Heart right ventricle (tissue), 16 donors: ENCODE measurements at regions of chr6 and their contacts with region 1.

Region 1: GRCh38 chr6:150072201-150072600 is 3.3 kb upstream of the ULBP3 start:
- DNase-seq: peak in 1 of 2 donors; percentile 30
- ATAC-seq: no peak
- H3K4me3 ChIP-seq: no peak overlapping the region
- H3K27ac ChIP-seq: no peak overlapping the region
- H3K4me1 ChIP-seq: peaks cover 0 to 16% (median 7%) of the 10 kb centered on the region in 9 donors
- H3K27me3 ChIP-seq: peaks cover 0 to 17% (median 0%) of the 10 kb centered on the region in 7 donors
- CTCF ChIP-seq: no peak

Region 2: DNA sequence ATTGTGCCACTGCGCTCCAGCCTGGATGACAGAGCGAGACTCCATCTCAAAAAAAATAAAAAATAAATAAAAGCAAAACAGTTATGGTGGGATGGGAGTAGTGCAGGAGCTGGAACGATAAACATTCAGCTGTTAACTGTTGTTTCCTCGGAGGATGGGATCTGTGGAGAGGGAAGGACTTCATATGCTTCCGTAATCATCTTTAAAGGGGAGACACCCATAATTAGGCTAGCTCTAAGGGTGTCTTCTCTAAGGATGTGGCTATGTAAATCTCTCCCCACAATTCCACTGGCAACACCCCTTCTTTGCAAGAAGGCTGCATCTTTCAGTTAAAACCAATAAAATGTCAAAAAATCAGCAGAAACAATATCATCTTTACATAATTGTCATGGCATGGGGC is 750.7 kb after region 1 on chr6:
- intact Hi-C with region 1: loop called in 3 of 10 experiments (anchors 10 kb)
- DNase-seq: no peak
- ATAC-seq: no peak
- H3K4me3 ChIP-seq: no peak overlapping the region
- H3K27ac ChIP-seq: no peak overlapping the region
- H3K4me1 ChIP-seq: peaks cover 0 to under 1% (median 0%) of the 10 kb centered on the region in 9 donors
- H3K27me3 ChIP-seq: no peaks in the 10 kb centered on the region
- CTCF ChIP-seq: no peak